Activated CD4-positive, alpha-beta memory T cell treated with anti-CD3 and anti-CD28 coated beads, Interleukin-2, amount 10 ng/mL, durations not matched to agents 7 days and 5 days (primary cell): ENCODE measurements at regions of chr6 and their contacts with region 1.

Region 1: GRCh38 chr6:27146706-27147505 is 100.6 kb upstream of the PRSS16 start:
- DNase-seq: peak; percentile 87
- H3K4me3 Mint-ChIP-seq: no peak overlapping the region
- H3K27ac Mint-ChIP-seq: no peak overlapping the region
- H3K4me1 Mint-ChIP-seq: peaks cover 31% of the 10 kb centered on the region
- H3K27me3 Mint-ChIP-seq: no peaks in the 10 kb centered on the region

Region 2: DNA sequence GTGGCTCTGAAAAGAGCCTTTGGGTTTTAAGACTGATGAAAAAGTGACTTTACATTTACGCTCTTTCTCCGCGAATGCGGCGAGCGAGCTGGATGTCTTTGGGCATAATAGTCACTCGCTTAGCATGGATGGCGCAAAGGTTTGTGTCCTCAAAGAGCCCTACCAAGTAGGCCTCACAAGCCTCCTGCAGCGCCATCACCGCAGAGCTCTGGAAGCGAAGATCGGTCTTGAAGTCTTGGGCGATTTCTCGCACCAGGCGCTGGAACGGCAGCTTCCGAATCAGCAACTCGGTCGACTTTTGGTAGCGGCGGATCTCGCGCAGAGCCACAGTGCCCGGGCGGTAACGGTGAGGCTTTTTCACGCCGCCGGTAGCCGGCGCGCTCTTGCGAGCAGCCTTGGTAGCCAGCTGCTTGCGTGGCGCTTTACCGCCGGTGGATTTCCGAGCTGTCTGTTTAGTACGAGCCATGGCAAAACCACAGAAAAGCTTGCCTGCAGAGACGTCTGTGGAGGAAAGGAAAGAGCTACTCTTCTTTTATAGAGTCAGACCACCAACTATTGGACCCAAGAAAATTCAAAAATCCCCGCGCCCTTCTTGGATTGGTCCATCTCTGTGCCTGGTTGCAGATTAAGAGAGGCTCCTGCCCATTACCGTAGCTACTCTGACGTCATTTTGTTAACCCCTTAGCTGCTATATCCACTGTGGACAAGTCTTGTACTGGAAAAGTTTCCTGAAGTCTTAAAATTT is 1115.1 kb before region 1 on chr6:
- CTCF ChIA-PET with region 1: interaction called, 4 read pairs
- POLR2A ChIA-PET with region 1: interaction called, 32 read pairs
- DNase-seq: peak; percentile 92
- H3K4me3 Mint-ChIP-seq: peak overlapping the region; percentile 84
- H3K27ac Mint-ChIP-seq: peak overlapping the region; percentile 100
- H3K4me1 Mint-ChIP-seq: peaks cover 74% of the 10 kb centered on the region
- H3K27me3 Mint-ChIP-seq: peaks cover 4% of the 10 kb centered on the region

Region 3: GRCh38 chr6:26216356-26216885 is 930.5 kb before region 1 on chr6:
- CTCF ChIA-PET with region 1: no interaction called
- POLR2A ChIA-PET with region 1: interaction called, 17 read pairs
- DNase-seq: peak; percentile 90
- H3K4me3 Mint-ChIP-seq: no peak overlapping the region
- H3K27ac Mint-ChIP-seq: no peak overlapping the region
- H3K4me1 Mint-ChIP-seq: peaks cover 28% of the 10 kb centered on the region
- H3K27me3 Mint-ChIP-seq: no peaks in the 10 kb centered on the region

Region 4: DNA sequence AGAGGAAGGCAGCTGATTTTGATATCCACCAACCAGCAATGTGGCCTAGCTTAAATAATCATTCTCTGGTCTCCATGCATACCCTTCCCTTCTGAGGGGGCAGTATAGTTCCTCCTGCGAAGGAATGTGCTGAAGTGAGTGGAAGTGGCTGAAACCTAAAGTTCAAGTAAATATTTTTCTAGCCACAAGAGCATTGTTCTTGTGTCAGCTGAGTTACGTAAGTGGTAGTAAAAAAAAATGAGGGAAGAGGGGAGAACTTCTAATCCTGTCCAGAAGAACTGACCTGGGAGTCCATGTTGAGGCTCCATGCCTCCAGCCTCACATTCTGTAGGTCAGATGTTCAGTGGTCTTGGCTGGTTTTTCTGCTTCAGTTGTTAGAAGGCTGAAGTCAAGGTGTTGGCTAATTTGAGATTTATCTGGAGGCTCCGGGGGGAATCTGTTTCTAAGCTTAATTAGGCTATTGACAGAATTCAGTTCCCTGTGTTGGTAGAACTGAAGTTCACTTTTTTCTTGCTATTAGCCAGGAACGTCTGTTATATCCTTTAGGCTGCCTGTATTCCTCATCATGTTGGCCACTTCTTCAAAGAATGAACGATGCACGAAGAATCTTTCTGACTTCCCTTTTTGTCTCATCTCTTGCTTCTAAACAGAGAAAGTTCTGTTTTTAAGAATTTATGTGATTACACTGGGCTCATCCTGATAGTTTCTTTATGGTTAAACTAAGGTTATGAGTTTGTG is 106.5 kb before region 1 on chr6:
- CTCF ChIA-PET with region 1: no interaction called
- POLR2A ChIA-PET with region 1: no interaction called
- DNase-seq: no peak
- H3K4me3 Mint-ChIP-seq: no peak overlapping the region
- H3K27ac Mint-ChIP-seq: no peak overlapping the region
- H3K4me1 Mint-ChIP-seq: no peaks in the 10 kb centered on the region
- H3K27me3 Mint-ChIP-seq: peaks cover 30% of the 10 kb centered on the region

Region 5: GRCh38 chr6:27132532-27133280 is 14.2 kb before region 1 on chr6:
- CTCF ChIA-PET with region 1: interaction called, 66 read pairs
- POLR2A ChIA-PET with region 1: interaction called, 971 read pairs
- DNase-seq: peak; percentile 95
- H3K4me3 Mint-ChIP-seq: no peak overlapping the region
- H3K27ac Mint-ChIP-seq: no peak overlapping the region
- H3K4me1 Mint-ChIP-seq: peaks cover 60% of the 10 kb centered on the region
- H3K27me3 Mint-ChIP-seq: no peaks in the 10 kb centered on the region

Region 6: GRCh38 chr6:27388293-27389197 is 241.6 kb after region 1 on chr6 and contains the start of gene ZNF391:
- CTCF ChIA-PET with region 1: no interaction called
- POLR2A ChIA-PET with region 1: no interaction called
- DNase-seq: peak; percentile 65
- H3K4me3 Mint-ChIP-seq: peak within 1 kb of the TSS; percentile 86
- H3K27ac Mint-ChIP-seq: peak within 1 kb of the TSS; percentile 69
- H3K4me1 Mint-ChIP-seq: peaks cover 19% of the 10 kb centered on the region
- H3K27me3 Mint-ChIP-seq: peaks cover 17% of the 10 kb centered on the region
- total RNA-seq, gene ZNF391: 1.3 to 1.6 TPM

Region 7: GRCh38 chr6:27472617-27473400 is 325.9 kb after region 1 on chr6 and contains the start of gene ZNF184:
- CTCF ChIA-PET with region 1: no interaction called
- POLR2A ChIA-PET with region 1: interaction called, 18 read pairs
- DNase-seq: peak; percentile 90
- H3K4me3 Mint-ChIP-seq: peak within 1 kb of the TSS; percentile 85
- H3K27ac Mint-ChIP-seq: peak within 1 kb of the TSS; percentile 93
- H3K4me1 Mint-ChIP-seq: peaks cover 52% of the 10 kb centered on the region
- H3K27me3 Mint-ChIP-seq: peaks cover 4% of the 10 kb centered on the region
- total RNA-seq, gene ZNF184: 16.2 to 16.3 TPM

Region 8: DNA sequence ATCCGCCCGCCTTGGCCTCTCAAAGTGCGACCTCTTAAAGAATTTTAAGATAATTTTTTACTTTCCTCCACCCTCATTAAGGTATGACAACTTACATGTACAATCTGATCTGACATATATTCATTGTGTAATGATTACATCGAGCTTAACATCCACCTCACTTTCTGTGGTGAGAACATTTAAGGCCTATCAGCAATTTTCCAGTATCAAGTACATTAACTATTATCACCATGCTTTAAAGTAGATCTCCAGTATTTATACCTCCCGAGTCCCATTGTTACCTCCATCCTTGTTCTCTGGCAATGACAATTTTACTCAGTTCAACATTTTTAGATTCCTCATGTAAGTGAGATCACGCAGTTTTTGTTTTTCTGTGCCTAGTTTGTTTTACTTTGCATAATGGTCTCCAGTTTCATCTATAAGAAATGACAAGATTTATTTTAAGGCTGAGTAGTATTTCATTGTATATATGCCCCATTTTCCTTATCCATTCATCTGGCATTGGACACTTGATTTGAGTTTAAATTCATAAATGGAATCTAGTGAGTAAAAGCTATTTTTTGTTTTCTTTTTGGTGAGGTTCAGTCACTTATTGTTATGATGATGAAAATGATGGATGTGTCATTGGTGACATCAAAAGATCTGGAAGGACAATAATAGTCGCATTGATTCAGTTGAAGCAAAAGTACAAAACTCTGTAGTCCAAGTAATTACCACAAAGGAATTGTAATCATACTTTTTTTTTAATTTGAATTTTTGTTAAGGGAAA is 678.3 kb after region 1 on chr6:
- CTCF ChIA-PET with region 1: interaction called, 3 read pairs
- POLR2A ChIA-PET with region 1: interaction called, 70 read pairs
- DNase-seq: no peak
- H3K4me3 Mint-ChIP-seq: peak overlapping the region; percentile 82
- H3K27ac Mint-ChIP-seq: peak overlapping the region; percentile 99
- H3K4me1 Mint-ChIP-seq: peaks cover 51% of the 10 kb centered on the region
- H3K27me3 Mint-ChIP-seq: no peaks in the 10 kb centered on the region